T-cell (primary cell): ENCODE measurements at regions of chr11 and their contacts with region 1.

Region 1: GRCh38 chr11:107916671-107917241 is 11.5 kb upstream of the RAB39A start:
- DNase-seq: peak in 18 of 35 experiments; percentile 6 to 59 (median 16)
- ATAC-seq: no peak
- H3K4me3 ChIP-seq: no peak overlapping the region
- H3K4me3 Mint-ChIP-seq: no peak overlapping the region
- H3K27ac ChIP-seq: no peak overlapping the region
- H3K27ac Mint-ChIP-seq: no peak overlapping the region
- H3K4me1 ChIP-seq: no peaks in the 10 kb centered on the region
- H3K4me1 Mint-ChIP-seq: no peaks in the 10 kb centered on the region
- H3K27me3 ChIP-seq: peaks cover 0 to 22% of the 10 kb centered on the region in 2 experiments
- H3K27me3 Mint-ChIP-seq: peaks cover 8 to 9% of the 10 kb centered on the region in 2 donors

Region 2: GRCh38 chr11:107864591-107864990 is 52.2 kb before region 1 on chr11:
- CTCF ChIA-PET with region 1: no interaction called
- POLR2A ChIA-PET with region 1: interaction called in 1 of 2 experiments, 10 read pairs
- DNase-seq: no peak
- ATAC-seq: no peak
- H3K4me3 ChIP-seq: no peak overlapping the region
- H3K4me3 Mint-ChIP-seq: no peak overlapping the region
- H3K27ac ChIP-seq: no peak overlapping the region
- H3K27ac Mint-ChIP-seq: no peak overlapping the region
- H3K4me1 ChIP-seq: peaks cover 0 to 4% of the 10 kb centered on the region in 2 experiments
- H3K4me1 Mint-ChIP-seq: peaks cover 3 to 4% (median 3%) of the 10 kb centered on the region in 3 donors
- H3K27me3 ChIP-seq: peaks cover 0 to 4% of the 10 kb centered on the region in 2 experiments
- H3K27me3 Mint-ChIP-seq: no peaks in the 10 kb centered on the region

Region 3: GRCh38 chr11:107947904-107948303 is 31.1 kb after region 1 on chr11:
- CTCF ChIA-PET with region 1: no interaction called
- POLR2A ChIA-PET with region 1: interaction called in 1 of 2 experiments, 16 read pairs
- DNase-seq: no peak
- ATAC-seq: no peak
- H3K4me3 ChIP-seq: no peak overlapping the region
- H3K4me3 Mint-ChIP-seq: no peak overlapping the region
- H3K27ac ChIP-seq: no peak overlapping the region
- H3K27ac Mint-ChIP-seq: no peak overlapping the region
- H3K4me1 ChIP-seq: no peaks in the 10 kb centered on the region
- H3K4me1 Mint-ChIP-seq: no peaks in the 10 kb centered on the region
- H3K27me3 ChIP-seq: no peaks in the 10 kb centered on the region
- H3K27me3 Mint-ChIP-seq: peaks cover 0 to 13% of the 10 kb centered on the region in 2 donors

Region 4: GRCh38 chr11:109349276-109350080 is 1432.7 kb after region 1 on chr11:
- CTCF ChIA-PET with region 1: no interaction called
- POLR2A ChIA-PET with region 1: no interaction called
- DNase-seq: no peak
- ATAC-seq: no peak
- H3K4me3 ChIP-seq: no peak overlapping the region
- H3K4me3 Mint-ChIP-seq: no peak overlapping the region
- H3K27ac ChIP-seq: no peak overlapping the region
- H3K27ac Mint-ChIP-seq: no peak overlapping the region
- H3K4me1 ChIP-seq: no peaks in the 10 kb centered on the region
- H3K4me1 Mint-ChIP-seq: no peaks in the 10 kb centered on the region
- H3K27me3 ChIP-seq: no peaks in the 10 kb centered on the region
- H3K27me3 Mint-ChIP-seq: no peaks in the 10 kb centered on the region